ENCODE measurements at regions of chr2 and their contacts with region 1.

Region 1: GRCh38 chr2:69369802-69370201 is 17.2 kb downstream of the GFPT1 start:
- DNase-seq: no peak
- ATAC-seq: no peak
- H3K4me3 ChIP-seq: no peak overlapping the region
- H3K4me3 Mint-ChIP-seq: no peak overlapping the region
- H3K27ac ChIP-seq: no peak overlapping the region
- H3K27ac Mint-ChIP-seq: no peak overlapping the region
- H3K4me1 ChIP-seq: no peaks in the 10 kb centered on the region
- H3K4me1 Mint-ChIP-seq: peaks cover 2% of the 10 kb centered on the region
- H3K27me3 ChIP-seq: no peaks in the 10 kb centered on the region
- H3K27me3 Mint-ChIP-seq: no peaks in the 10 kb centered on the region
- CTCF ChIP-seq: no peak

Region 2: DNA sequence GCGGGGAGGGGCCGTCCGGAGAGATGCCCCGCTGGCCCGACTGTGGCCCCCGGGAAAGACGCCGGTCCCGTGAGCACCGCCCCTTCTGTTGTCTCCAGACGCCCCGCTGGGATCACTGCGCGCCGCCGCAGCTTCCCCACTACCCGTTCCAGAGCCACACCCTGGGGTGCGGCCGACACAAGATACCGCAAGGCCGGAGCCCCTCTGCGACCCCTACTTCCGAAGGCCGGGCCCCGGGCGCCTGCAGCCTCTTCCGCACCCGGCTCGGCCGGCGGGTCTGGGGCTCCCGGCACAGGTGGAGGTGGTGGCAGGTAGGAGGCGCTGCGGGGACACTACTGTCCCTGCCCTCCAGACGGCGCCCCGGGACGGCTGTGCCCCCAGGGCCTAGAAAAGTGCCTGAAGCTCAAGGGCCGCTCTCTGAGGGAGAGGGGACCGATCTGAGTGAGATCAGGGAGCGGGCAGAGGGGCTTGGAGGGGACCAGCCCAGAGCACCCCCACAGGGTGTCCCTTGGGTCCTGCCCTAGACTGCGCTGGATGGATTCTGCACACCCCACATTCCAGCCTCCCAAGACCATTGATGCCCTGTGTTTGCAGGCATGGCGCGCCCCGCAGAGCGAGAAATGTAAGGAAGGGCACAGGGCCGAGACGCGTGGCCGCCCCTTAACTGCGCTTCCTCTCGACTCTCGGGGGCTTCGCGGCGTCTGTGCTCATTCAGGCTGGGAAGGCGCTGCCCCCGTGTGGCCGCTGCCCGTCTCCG is 62.8 kb before region 1 on chr2:
- CTCF ChIA-PET with region 1: no interaction called
- POLR2A ChIA-PET with region 1: no interaction called
- intact Hi-C with region 1: no loop called
- DNase-seq: peak; percentile 36 to 81 (median 68)
- ATAC-seq: peak; percentile 89
- H3K4me3 ChIP-seq: peak overlapping the region; percentile 49 to 58
- H3K4me3 Mint-ChIP-seq: peak overlapping the region; percentile 79
- H3K27ac ChIP-seq: no peak overlapping the region
- H3K27ac Mint-ChIP-seq: no peak overlapping the region
- H3K4me1 ChIP-seq: peaks cover 13% of the 10 kb centered on the region
- H3K4me1 Mint-ChIP-seq: peaks cover 21% of the 10 kb centered on the region
- H3K27me3 ChIP-seq: peaks cover 4 to 15% of the 10 kb centered on the region in 2 experiments
- H3K27me3 Mint-ChIP-seq: peaks cover 22% of the 10 kb centered on the region
- CTCF ChIP-seq: peak; percentile 78

Region 3: DNA sequence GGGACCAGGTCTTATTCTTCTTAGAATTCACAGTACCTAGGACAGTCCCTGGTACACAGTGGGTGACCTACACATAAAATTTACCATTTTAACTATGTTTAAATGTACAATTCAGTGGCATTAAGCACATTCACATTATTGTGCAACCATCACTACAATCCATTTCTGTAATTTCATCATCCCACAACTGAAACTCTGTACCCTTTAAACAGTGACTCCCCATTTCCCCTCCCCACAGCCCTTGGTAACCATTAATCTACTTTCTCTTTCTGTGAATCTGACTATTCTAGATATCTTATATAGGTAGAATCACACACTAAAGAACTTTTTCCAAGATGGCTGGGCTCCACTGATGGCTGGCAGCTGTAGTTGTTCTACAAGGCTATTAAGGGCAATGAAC is 24.4 kb before region 1 on chr2:
- CTCF ChIA-PET with region 1: no interaction called
- POLR2A ChIA-PET with region 1: no interaction called
- intact Hi-C with region 1: loop called in 1 of 2 experiments (anchors 1 kb)
- DNase-seq: no peak
- ATAC-seq: no peak
- H3K4me3 ChIP-seq: no peak overlapping the region
- H3K4me3 Mint-ChIP-seq: no peak overlapping the region
- H3K27ac ChIP-seq: no peak overlapping the region
- H3K27ac Mint-ChIP-seq: no peak overlapping the region
- H3K4me1 ChIP-seq: no peaks in the 10 kb centered on the region
- H3K4me1 Mint-ChIP-seq: no peaks in the 10 kb centered on the region
- H3K27me3 ChIP-seq: no peaks in the 10 kb centered on the region
- H3K27me3 Mint-ChIP-seq: no peaks in the 10 kb centered on the region
- CTCF ChIP-seq: no peak

Region 4: GRCh38 chr2:69356471-69356870 is 13.3 kb before region 1 on chr2:
- CTCF ChIA-PET with region 1: no interaction called
- POLR2A ChIA-PET with region 1: no interaction called
- intact Hi-C with region 1: no loop called
- DNase-seq: no peak
- ATAC-seq: no peak
- H3K4me3 ChIP-seq: no peak overlapping the region
- H3K4me3 Mint-ChIP-seq: no peak overlapping the region
- H3K27ac ChIP-seq: no peak overlapping the region
- H3K27ac Mint-ChIP-seq: no peak overlapping the region
- H3K4me1 ChIP-seq: no peaks in the 10 kb centered on the region
- H3K4me1 Mint-ChIP-seq: no peaks in the 10 kb centered on the region
- H3K27me3 ChIP-seq: no peaks in the 10 kb centered on the region
- H3K27me3 Mint-ChIP-seq: no peaks in the 10 kb centered on the region
- CTCF ChIP-seq: no peak